Uterus (tissue), 4 donors: ENCODE measurements at regions of chr9 and their contacts with region 1.

Region 1: GRCh38 chr9:130860458-130861316 is 25.6 kb downstream of the ABL1 start:
- DNase-seq: peak; percentile 83 to 87
- H3K4me3 ChIP-seq: no peak overlapping the region
- H3K27ac ChIP-seq: peak overlapping the region; percentile 76 to 80
- H3K4me1 ChIP-seq: peaks cover 14 to 23% of the 10 kb centered on the region in 2 donors
- H3K27me3 ChIP-seq: no peaks in the 10 kb centered on the region
- CTCF ChIP-seq: peak; percentile 34 to 71 (median 50)
- POLR2A ChIP-seq: no peak

Region 2: GRCh38 chr9:130682490-130683121 is 178.1 kb before region 1 on chr9:
- intact Hi-C with region 1: no loop called
- DNase-seq: peak; percentile 66 to 68
- H3K4me3 ChIP-seq: peak overlapping the region; percentile 15 to 50
- H3K27ac ChIP-seq: no peak overlapping the region
- H3K4me1 ChIP-seq: peaks cover 0 to 5% of the 10 kb centered on the region in 2 donors
- H3K27me3 ChIP-seq: no peaks in the 10 kb centered on the region
- CTCF ChIP-seq: peak; percentile 75 to 82 (median 78)
- POLR2A ChIP-seq: no peak

Region 3: GRCh38 chr9:130770679-130771442 is 89.8 kb before region 1 on chr9:
- intact Hi-C with region 1: loop called (anchors 5 kb)
- DNase-seq: no peak
- H3K4me3 ChIP-seq: no peak overlapping the region
- H3K27ac ChIP-seq: peak overlapping the region in 1 of 2 donors; percentile 13
- H3K4me1 ChIP-seq: no peaks in the 10 kb centered on the region
- H3K27me3 ChIP-seq: no peaks in the 10 kb centered on the region
- CTCF ChIP-seq: peak; percentile 68 to 90 (median 75)
- POLR2A ChIP-seq: no peak

Region 4: GRCh38 chr9:130927995-130928900 is 67.6 kb after region 1 on chr9:
- intact Hi-C with region 1: no loop called
- DNase-seq: no peak
- H3K4me3 ChIP-seq: no peak overlapping the region
- H3K27ac ChIP-seq: no peak overlapping the region
- H3K4me1 ChIP-seq: no peaks in the 10 kb centered on the region
- H3K27me3 ChIP-seq: no peaks in the 10 kb centered on the region
- CTCF ChIP-seq: no peak
- POLR2A ChIP-seq: no peak